ENCODE measurements at regions of chr1 and their contacts with region 1.

Region 1: GRCh38 chr1:213374369-213374768 is 323.3 kb downstream of the RPS6KC1 start:
- DNase-seq: no peak

Region 2: DNA sequence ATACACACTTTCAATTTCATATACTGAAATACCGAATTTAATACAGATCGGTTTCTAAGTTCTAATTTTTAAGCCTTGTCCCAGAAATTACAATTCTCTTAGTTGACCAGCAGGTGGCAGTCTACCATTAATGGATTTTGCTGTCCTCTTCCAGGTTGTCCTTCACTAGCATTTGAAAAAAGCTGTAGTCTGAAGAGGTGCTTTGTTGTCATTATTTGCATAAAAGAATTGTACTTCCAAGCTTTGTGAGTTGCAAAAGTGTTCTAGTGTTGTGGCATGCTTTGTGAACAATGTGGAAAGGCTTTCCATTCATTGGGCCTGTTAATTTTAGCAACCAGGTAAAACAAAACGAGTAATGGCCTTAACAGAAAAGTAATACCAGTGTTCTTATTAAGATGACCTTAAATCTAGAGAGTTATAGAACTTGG is 129.7 kb before region 1 on chr1:
- intact Hi-C with region 1: loop called (anchors 10 kb)
- DNase-seq: no peak

Region 3: GRCh38 chr1:213320191-213320870 is 54.0 kb before region 1 on chr1:
- intact Hi-C with region 1: no loop called
- DNase-seq: no peak

Region 4: DNA sequence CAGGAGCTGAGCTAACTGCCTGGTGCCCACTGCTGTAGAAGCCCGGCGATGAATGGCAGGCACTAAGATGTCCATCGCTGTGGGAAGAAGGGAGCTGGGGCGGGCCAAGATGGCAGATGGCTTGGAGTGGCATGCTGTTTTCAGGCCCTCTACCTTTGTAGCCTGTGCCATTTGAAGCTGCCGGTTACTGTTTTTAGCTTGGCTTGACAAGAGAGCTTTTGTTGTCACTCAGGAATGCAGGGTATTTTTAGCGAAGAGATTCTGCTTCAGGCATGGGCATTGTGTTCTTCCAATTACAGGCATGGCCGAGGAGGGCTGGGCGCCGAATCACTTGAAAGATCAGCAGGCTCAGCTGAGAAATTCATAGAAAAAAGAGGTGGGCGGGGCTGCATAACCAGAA is 25.3 kb after region 1 on chr1:
- intact Hi-C with region 1: no loop called
- DNase-seq: no peak

Region 5: GRCh38 chr1:213419369-213420030 is 45.1 kb after region 1 on chr1:
- intact Hi-C with region 1: loop called (anchors 5 kb)
- DNase-seq: peak; percentile 29

Region 6: DNA sequence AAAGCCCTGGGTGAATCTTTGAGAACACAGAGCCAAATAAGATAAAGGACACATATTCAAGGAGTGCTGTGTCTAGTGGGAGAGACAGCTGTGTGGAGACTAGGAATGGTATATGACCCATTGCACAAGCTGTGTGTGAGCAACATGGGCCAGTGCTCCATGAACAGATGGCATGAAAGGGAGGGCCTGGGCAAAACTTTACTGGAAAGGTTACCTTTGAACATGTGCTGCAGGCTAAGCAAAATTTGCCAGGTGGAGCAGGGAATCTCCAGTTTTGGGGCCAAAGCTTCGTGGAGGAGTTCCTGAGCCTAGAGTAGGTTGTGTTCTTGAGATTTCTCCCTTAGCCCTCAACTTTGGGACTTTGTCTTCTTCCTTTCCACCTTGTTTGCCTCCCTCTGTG is 167.3 kb after region 1 on chr1:
- intact Hi-C with region 1: loop called (anchors 10 kb)
- DNase-seq: no peak

Region 7: GRCh38 chr1:213982672-213983492 is 608.5 kb after region 1 on chr1:
- intact Hi-C with region 1: loop called (anchors 2 kb)
- DNase-seq: no peak

Region 8: GRCh38 chr1:214102907-214103306 is 728.5 kb after region 1 on chr1:
- intact Hi-C with region 1: loop called (anchors 5 kb)
- DNase-seq: no peak

Region 9: GRCh38 chr1:214123061-214123784 is 748.9 kb after region 1 on chr1:
- intact Hi-C with region 1: loop called (anchors 1 kb)
- DNase-seq: no peak

Measured in cardiac septum (tissue), 1 donor.